ENCODE measurements at regions of chr11 and their contacts with region 1.

Region 1: GRCh38 chr11:122808478-122808869 is 29.8 kb upstream of the CRTAM start:
- DNase-seq: no peak
- H3K4me3 ChIP-seq: no peak overlapping the region
- H3K27ac ChIP-seq: peak overlapping the region; percentile 1; the same call in 1 of the 2 replicates
- H3K4me1 ChIP-seq: peaks cover 24% of the 10 kb centered on the region
- H3K27me3 ChIP-seq: no peaks in the 10 kb centered on the region
- CTCF ChIP-seq: no peak

Region 2: GRCh38 chr11:123033895-123034294 is 225.4 kb after region 1 on chr11:
- CTCF ChIA-PET with region 1: no interaction called
- POLR2A ChIA-PET with region 1: interaction called, 11 read pairs
- intact Hi-C with region 1: no loop called
- DNase-seq: no peak
- H3K4me3 ChIP-seq: no peak overlapping the region
- H3K27ac ChIP-seq: no peak overlapping the region
- H3K4me1 ChIP-seq: no peaks in the 10 kb centered on the region
- H3K27me3 ChIP-seq: no peaks in the 10 kb centered on the region
- CTCF ChIP-seq: no peak

Measured in PC-9 (cell line).